B cell (primary cell): ENCODE measurements at regions of chr2 and their contacts with region 1.

Region 1: GRCh38 chr2:64767670-64768468 is 114.2 kb upstream of the SERTAD2 start:
- DNase-seq: peak; percentile 88
- ATAC-seq: peak; percentile 79
- H3K4me3 ChIP-seq: peak overlapping the region; percentile 60 to 99 (median 87)
- H3K4me3 Mint-ChIP-seq: peak overlapping the region; percentile 94
- H3K27ac ChIP-seq: peak overlapping the region; percentile 82 to 95
- H3K27ac Mint-ChIP-seq: peak overlapping the region; percentile 97
- H3K4me1 ChIP-seq: peaks cover 13% of the 10 kb centered on the region in 2 donors
- H3K4me1 Mint-ChIP-seq: peaks cover 24% of the 10 kb centered on the region
- H3K27me3 ChIP-seq: no peaks in the 10 kb centered on the region
- H3K27me3 Mint-ChIP-seq: no peaks in the 10 kb centered on the region
- CTCF ChIP-seq: no peak

Region 2: GRCh38 chr2:64144057-64145013 is 623.5 kb before region 1 on chr2 and contains the start of gene PELI1:
- CTCF ChIA-PET with region 1: no interaction called
- POLR2A ChIA-PET with region 1: no interaction called
- intact Hi-C with region 1: loop called (anchors 10 kb)
- DNase-seq: peak; percentile 95
- ATAC-seq: peak; percentile 95
- H3K4me3 ChIP-seq: peak within 1 kb of the TSS; percentile 77 to 98 (median 85)
- H3K4me3 Mint-ChIP-seq: peak within 1 kb of the TSS; percentile 92
- H3K27ac ChIP-seq: peak within 1 kb of the TSS; percentile 81 to 86
- H3K27ac Mint-ChIP-seq: peak within 1 kb of the TSS; percentile 94
- H3K4me1 ChIP-seq: peaks cover 22 to 32% of the 10 kb centered on the region in 2 donors
- H3K4me1 Mint-ChIP-seq: peaks cover 38% of the 10 kb centered on the region
- H3K27me3 ChIP-seq: no peaks in the 10 kb centered on the region
- H3K27me3 Mint-ChIP-seq: no peaks in the 10 kb centered on the region
- CTCF ChIP-seq: peak; percentile 10
- total RNA-seq, gene PELI1: 115 and 117 TPM in 2 replicates

Region 3: GRCh38 chr2:64609227-64609941 is 158.5 kb before region 1 on chr2:
- CTCF ChIA-PET with region 1: interaction called, 7 read pairs
- POLR2A ChIA-PET with region 1: interaction called, 3 read pairs
- intact Hi-C with region 1: loop called (anchors 1 kb)
- DNase-seq: peak; percentile 86
- ATAC-seq: peak; percentile 72
- H3K4me3 ChIP-seq: peak overlapping the region; percentile 51 to 77 (median 64)
- H3K4me3 Mint-ChIP-seq: peak overlapping the region; percentile 78
- H3K27ac ChIP-seq: peak overlapping the region; percentile 53 to 84
- H3K27ac Mint-ChIP-seq: peak overlapping the region; percentile 78
- H3K4me1 ChIP-seq: peaks cover 22 to 34% of the 10 kb centered on the region in 2 donors
- H3K4me1 Mint-ChIP-seq: peaks cover 29% of the 10 kb centered on the region
- H3K27me3 ChIP-seq: no peaks in the 10 kb centered on the region
- H3K27me3 Mint-ChIP-seq: no peaks in the 10 kb centered on the region
- CTCF ChIP-seq: peak; percentile 53

Region 4: GRCh38 chr2:64819774-64820696 is 52.2 kb after region 1 on chr2:
- CTCF ChIA-PET with region 1: interaction called, 3 read pairs
- POLR2A ChIA-PET with region 1: no interaction called
- intact Hi-C with region 1: loop called (anchors 1 kb)
- DNase-seq: peak; percentile 53
- ATAC-seq: peak; percentile 87
- H3K4me3 ChIP-seq: peak overlapping the region in 3 of 5 experiments; percentile 1 to 47 (median 25)
- H3K4me3 Mint-ChIP-seq: peak overlapping the region; percentile 85
- H3K27ac ChIP-seq: peak overlapping the region; percentile 68 to 85
- H3K27ac Mint-ChIP-seq: peak overlapping the region; percentile 95
- H3K4me1 ChIP-seq: peaks cover 27 to 31% of the 10 kb centered on the region in 2 donors
- H3K4me1 Mint-ChIP-seq: peaks cover 49% of the 10 kb centered on the region
- H3K27me3 ChIP-seq: no peaks in the 10 kb centered on the region
- H3K27me3 Mint-ChIP-seq: no peaks in the 10 kb centered on the region
- CTCF ChIP-seq: no peak

Region 5: GRCh38 chr2:64859312-64860212 is 91.7 kb after region 1 on chr2:
- CTCF ChIA-PET with region 1: interaction called, 16 read pairs
- POLR2A ChIA-PET with region 1: interaction called, 13 read pairs
- intact Hi-C with region 1: loop called (anchors 1 kb)
- DNase-seq: peak; percentile 69
- ATAC-seq: peak; percentile 11
- H3K4me3 ChIP-seq: peak overlapping the region; percentile 61 to 79 (median 67)
- H3K4me3 Mint-ChIP-seq: peak overlapping the region; percentile 79
- H3K27ac ChIP-seq: peak overlapping the region; percentile 91 to 93
- H3K27ac Mint-ChIP-seq: no peak overlapping the region
- H3K4me1 ChIP-seq: peaks cover 76 to 80% of the 10 kb centered on the region in 2 donors
- H3K4me1 Mint-ChIP-seq: peaks cover 28% of the 10 kb centered on the region
- H3K27me3 ChIP-seq: no peaks in the 10 kb centered on the region
- H3K27me3 Mint-ChIP-seq: no peaks in the 10 kb centered on the region
- CTCF ChIP-seq: no peak

Region 6: GRCh38 chr2:64873472-64873924 is 105.6 kb after region 1 on chr2:
- CTCF ChIA-PET with region 1: no interaction called
- POLR2A ChIA-PET with region 1: no interaction called
- intact Hi-C with region 1: no loop called
- DNase-seq: peak; percentile 87
- ATAC-seq: peak; percentile 99
- H3K4me3 ChIP-seq: peak overlapping the region in 3 of 5 experiments; percentile 11 to 35 (median 29)
- H3K4me3 Mint-ChIP-seq: peak overlapping the region; percentile 67
- H3K27ac ChIP-seq: no peak overlapping the region
- H3K27ac Mint-ChIP-seq: no peak overlapping the region
- H3K4me1 ChIP-seq: peaks cover 7 to 9% of the 10 kb centered on the region in 2 donors
- H3K4me1 Mint-ChIP-seq: peaks cover 7% of the 10 kb centered on the region
- H3K27me3 ChIP-seq: no peaks in the 10 kb centered on the region
- H3K27me3 Mint-ChIP-seq: no peaks in the 10 kb centered on the region
- CTCF ChIP-seq: peak; percentile 93